ENCODE measurements at regions of chr17 and their contacts with region 1.

Region 1: GRCh38 chr17:21511363-21512198 is 135.4 kb downstream of the KCNJ12 start:
- DNase-seq: peak; percentile 92
- ATAC-seq: peak; percentile 97

Region 2: GRCh38 chr17:21119247-21119918 is 392.2 kb before region 1 on chr17:
- intact Hi-C with region 1: loop called (anchors 1 kb)
- DNase-seq: peak; percentile 86
- ATAC-seq: peak; percentile 59

Region 3: DNA sequence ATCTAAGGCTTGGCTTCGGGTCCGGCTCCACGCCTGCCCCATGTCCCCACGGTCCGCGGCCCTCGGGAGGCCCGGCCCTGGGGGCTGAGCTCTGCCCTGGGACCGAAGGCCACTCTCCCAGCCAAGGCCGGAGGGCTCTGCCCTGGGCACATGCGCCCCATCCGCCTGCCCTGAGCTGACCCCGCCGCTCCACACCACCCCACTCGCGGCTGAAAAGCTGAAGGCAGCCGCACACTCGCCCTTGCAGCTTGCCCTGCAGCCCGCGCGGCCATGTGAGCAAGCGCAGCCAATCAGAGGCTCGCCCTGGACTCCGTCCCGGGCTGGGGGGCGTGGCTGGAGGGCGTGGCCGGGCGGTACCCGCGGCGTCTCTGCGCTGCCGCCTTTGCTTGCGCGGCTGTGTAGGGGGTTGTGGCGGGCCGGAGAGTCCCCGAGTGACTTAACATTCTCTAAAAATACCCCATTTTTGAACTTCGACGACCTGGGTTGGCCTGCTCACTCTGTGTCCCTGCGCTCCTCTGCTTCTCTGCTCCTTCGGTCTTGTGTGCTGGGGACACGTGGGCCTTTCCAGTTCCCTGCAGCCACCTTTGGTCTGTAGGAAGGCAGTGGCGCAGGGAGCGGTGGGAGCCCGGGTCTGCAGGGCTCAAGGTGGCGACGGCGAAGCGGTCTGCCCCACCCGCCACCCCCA is 235.9 kb before region 1 on chr17:
- intact Hi-C with region 1: loop called (anchors 1 kb)
- DNase-seq: peak; percentile 98
- ATAC-seq: peak; percentile 97

Region 4: DNA sequence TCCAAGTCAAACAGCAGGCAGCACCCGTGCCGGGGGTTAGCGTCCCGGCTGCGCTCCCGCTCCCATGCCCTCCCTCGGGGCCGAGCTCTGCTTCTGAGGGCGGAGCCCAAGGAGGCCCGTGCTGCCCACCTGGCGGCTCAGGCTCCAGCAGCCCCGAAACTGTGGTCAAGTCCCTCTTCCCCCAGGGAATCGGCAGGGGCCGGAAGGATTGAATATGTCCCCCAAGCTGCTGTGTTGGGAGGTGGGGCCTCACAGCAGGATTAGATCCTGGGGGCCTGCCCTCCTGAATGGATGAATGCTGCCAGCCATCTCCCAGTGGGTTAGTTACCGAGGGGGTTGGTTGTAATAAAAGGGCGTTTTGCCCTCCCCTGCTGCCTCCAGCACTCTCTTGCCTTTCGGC is 193.1 kb before region 1 on chr17:
- intact Hi-C with region 1: loop called (anchors 10 kb)
- DNase-seq: peak; percentile 44
- ATAC-seq: no peak

Region 5: DNA sequence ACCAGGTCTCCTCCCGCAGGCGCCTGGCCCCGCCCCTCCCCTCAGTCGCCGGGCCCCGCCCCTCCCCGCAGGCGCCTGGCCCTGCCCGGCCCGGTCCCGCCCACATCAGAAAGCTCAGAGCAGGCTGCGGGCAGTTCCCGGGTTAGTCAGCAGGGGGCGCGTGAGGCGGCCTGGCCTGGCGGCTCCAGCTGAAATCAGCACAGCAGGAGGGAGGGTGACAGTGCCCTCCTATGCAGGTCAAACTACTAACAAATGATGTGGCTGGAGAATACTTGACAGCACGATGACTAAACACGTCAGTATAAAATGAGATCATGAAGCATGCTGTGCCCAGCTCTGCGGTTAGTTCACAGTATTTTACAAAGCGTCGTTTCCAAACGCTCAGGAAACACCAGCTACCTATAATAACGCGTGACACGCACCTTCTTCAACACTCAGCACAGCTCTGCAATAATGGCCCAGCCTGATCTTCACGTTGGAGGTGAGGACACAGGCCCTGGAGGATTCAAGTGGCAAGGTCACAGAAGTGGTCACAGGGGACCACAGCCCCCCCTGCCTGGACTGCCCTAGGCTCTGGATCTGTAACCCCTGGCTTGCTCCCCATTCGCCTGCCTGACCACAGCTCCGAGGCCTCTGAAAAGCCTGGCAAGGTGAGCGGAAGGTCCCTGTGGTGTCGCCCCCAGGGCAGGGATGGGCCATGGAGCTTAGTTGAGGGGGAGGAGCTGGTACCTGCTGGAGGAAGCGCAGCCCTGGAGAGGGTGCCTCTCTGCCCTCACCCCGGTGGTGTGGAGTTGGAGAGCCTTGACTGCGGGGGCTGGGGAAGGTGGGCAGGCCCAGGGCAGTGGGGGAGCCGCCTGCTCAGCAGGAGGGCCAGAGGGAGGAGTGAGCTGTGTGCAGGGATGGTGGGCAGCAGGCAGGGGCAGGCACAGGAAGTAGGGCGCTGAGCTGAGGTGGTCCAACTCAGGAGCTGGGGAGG is 54.2 kb before region 1 on chr17:
- intact Hi-C with region 1: loop called (anchors 1 kb)
- DNase-seq: peak; percentile 93
- ATAC-seq: peak; percentile 95

Region 6: DNA sequence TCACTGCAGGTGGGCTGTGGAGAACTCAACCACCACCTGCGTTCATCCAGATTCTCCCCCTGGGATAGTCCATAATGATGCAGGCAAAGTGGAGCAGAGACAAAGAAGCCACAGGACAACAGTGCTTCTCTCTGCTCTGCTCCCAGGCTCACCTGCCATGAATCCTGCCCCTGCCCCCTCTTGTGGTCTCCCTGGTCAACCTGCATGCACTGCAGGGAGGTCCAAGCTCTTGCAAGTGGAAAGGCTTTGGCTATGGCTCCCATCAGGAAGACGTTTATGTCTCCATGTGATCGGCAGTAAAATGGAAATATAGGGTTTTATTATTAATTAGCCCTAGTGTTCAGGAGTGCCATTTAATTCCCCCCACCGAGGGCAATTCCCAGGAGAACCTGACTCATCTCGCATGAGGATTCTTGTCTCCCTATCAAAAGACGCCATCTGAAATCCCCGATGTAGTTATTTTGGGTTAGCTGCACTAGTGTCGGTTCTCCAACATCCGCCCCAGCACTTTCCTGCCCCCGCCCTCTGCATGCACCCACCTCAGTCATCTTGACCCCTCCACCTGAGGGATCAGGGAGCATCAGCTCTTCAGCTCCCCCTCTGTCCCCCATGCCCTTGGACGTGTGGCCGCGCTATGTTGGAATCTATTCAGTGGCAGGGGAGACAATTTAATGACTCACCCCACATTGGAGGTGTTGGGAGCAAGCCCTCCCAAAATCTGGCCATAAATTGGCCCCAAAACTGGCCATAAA is 43.7 kb before region 1 on chr17:
- intact Hi-C with region 1: no loop called
- DNase-seq: no peak
- ATAC-seq: no peak

Measured in Right ventricle myocardium inferior (tissue), 1 donor.